Naive thymus-derived CD4-positive, alpha-beta T cell (primary cell): ENCODE measurements at regions of chr1 and their contacts with region 1.

Region 1: GRCh38 chr1:85109475-85109874 is 61.2 kb upstream of the MCOLN3 start:
- DNase-seq: peak in 7 of 9 donors; percentile 27 to 57 (median 43)
- ATAC-seq: peak; percentile 69
- H3K4me3 ChIP-seq: no peak overlapping the region
- H3K4me3 Mint-ChIP-seq: no peak overlapping the region
- H3K27ac ChIP-seq: no peak overlapping the region
- H3K27ac Mint-ChIP-seq: peak overlapping the region in 1 of 9 donors; percentile 41
- H3K4me1 ChIP-seq: no peaks in the 10 kb centered on the region
- H3K4me1 Mint-ChIP-seq: no peaks in the 10 kb centered on the region
- H3K27me3 ChIP-seq: no peaks in the 10 kb centered on the region
- H3K27me3 Mint-ChIP-seq: peaks cover 0 to 31% (median 0%) of the 10 kb centered on the region in 5 donors

Region 2: DNA sequence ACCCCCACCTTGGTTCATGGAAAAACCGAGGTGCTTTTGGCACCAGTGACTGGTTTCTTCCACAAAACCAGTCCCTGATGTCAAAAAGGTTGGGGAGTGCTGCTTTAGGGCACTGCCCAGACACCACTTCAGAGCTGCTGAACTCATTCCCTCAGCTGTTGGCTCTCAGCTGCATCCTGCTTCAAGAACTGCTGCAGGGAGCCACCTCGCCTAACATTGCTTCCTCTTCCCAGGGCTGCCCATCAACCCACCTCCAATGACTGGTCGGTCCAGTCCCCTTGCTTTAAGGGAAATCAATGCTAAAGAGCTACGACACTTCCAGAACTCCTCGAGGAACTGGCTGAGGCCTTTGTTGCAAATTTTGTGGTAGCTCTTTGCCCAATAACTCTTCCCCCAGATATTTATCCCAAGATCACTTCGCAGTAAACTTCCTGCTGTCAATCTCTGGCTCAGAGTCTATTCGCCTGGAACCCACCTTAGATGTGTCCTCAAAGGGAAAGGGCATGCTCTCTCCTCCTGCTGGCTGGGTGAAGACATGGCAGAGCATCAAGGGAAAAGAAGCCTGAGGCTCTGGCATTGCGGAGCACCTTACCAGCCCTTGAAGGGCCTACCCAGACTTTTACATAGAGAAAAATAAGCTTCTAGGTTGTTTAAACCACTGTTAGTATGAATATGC is 121.0 kb after region 1 on chr1:
- CTCF ChIA-PET with region 1: interaction called, 7 read pairs
- POLR2A ChIA-PET with region 1: no interaction called
- intact Hi-C with region 1: loop called in 1 of 2 experiments (anchors 1 kb)
- DNase-seq: peak in 2 of 9 donors; percentile 11 to 19
- ATAC-seq: peak; percentile 54
- H3K4me3 ChIP-seq: no peak overlapping the region
- H3K4me3 Mint-ChIP-seq: no peak overlapping the region
- H3K27ac ChIP-seq: no peak overlapping the region
- H3K27ac Mint-ChIP-seq: no peak overlapping the region
- H3K4me1 ChIP-seq: no peaks in the 10 kb centered on the region
- H3K4me1 Mint-ChIP-seq: peaks cover 0 to 4% (median 0%) of the 10 kb centered on the region in 7 donors
- H3K27me3 ChIP-seq: no peaks in the 10 kb centered on the region
- H3K27me3 Mint-ChIP-seq: peaks cover 0 to 22% (median 0%) of the 10 kb centered on the region in 5 donors

Region 3: GRCh38 chr1:85240174-85240601 is 130.7 kb after region 1 on chr1:
- CTCF ChIA-PET with region 1: interaction called, 6 read pairs
- POLR2A ChIA-PET with region 1: no interaction called
- intact Hi-C with region 1: loop called (anchors 1 kb)
- DNase-seq: peak in 1 of 9 donors; percentile 26
- ATAC-seq: peak; percentile 62
- H3K4me3 ChIP-seq: no peak overlapping the region
- H3K4me3 Mint-ChIP-seq: peak overlapping the region in 6 of 10 donors; percentile 17 to 51 (median 24)
- H3K27ac ChIP-seq: no peak overlapping the region
- H3K27ac Mint-ChIP-seq: peak overlapping the region in 6 of 9 donors; percentile 6 to 89 (median 79)
- H3K4me1 ChIP-seq: peaks cover 0 to 10% of the 10 kb centered on the region in 2 donors
- H3K4me1 Mint-ChIP-seq: peaks cover 1 to 22% (median 17%) of the 10 kb centered on the region in 7 donors
- H3K27me3 ChIP-seq: no peaks in the 10 kb centered on the region
- H3K27me3 Mint-ChIP-seq: peaks cover 0 to 9% (median 0%) of the 10 kb centered on the region in 5 donors

Region 4: GRCh38 chr1:85245891-85246290 is 136.4 kb after region 1 on chr1:
- CTCF ChIA-PET with region 1: interaction called, 10 read pairs
- POLR2A ChIA-PET with region 1: no interaction called
- intact Hi-C with region 1: no loop called
- DNase-seq: no peak
- ATAC-seq: no peak
- H3K4me3 ChIP-seq: no peak overlapping the region
- H3K4me3 Mint-ChIP-seq: no peak overlapping the region
- H3K27ac ChIP-seq: no peak overlapping the region
- H3K27ac Mint-ChIP-seq: no peak overlapping the region
- H3K4me1 ChIP-seq: peaks cover 0 to 3% of the 10 kb centered on the region in 2 donors
- H3K4me1 Mint-ChIP-seq: peaks cover 1 to 19% (median 12%) of the 10 kb centered on the region in 7 donors
- H3K27me3 ChIP-seq: no peaks in the 10 kb centered on the region
- H3K27me3 Mint-ChIP-seq: no peaks in the 10 kb centered on the region